Ovary (tissue), 10 donors: ENCODE measurements at regions of chr3 and their contacts with region 1.

Region 1: DNA sequence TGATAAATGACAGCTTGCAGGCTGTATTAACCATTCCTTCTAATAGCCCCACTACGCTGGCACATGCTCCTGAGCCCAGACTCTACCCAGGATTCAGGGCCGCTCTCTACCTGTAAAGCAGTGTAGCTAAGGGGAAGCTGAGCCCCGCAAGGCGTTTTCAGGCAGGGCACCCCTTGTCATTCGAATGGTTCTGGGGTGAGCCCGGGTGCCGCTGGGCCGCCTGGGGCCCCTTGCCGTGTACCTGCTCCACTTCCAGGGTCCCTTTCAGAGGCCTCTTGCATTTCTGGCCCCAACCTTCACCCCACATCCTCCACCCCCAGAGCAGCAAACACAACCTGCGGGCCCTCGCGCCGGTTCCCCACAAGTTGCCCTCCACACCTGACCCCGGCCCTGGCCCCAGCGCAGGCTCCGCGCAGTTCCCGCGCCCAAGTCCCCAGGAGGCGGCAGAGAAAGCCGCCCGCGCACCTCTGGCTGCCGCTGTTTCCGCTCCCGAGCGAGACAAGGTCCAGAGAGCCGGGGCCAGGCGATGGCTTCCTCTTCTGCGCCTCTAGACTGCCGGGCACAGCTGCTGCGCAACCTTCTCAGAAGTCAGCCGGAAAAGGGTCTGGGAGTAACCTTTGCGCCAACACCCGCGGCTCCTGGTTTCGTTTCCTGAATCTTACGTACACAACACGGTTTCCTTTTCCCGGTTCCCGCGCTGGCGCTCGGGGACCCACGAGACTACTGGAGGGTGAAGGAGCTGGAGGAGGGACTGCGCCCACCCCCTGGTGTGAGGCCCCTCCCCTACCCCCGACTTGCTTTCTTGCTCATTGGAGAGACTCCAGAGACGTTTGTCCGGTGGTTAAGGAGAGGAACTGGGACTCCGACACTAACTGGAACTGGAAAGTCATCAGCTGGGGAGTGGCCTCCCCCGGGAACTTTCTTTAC is at the start of gene PLSCR1:
- DNase-seq: peak; percentile 90 to 95 (median 92)
- H3K4me3 ChIP-seq: peak within 1 kb of the TSS; percentile 59
- H3K27ac ChIP-seq: peak within 1 kb of the TSS; percentile 98
- H3K4me1 ChIP-seq: peaks cover 6% of the 10 kb centered on the region
- H3K27me3 ChIP-seq: no peaks in the 10 kb centered on the region
- CTCF ChIP-seq: peak in 1 of 3 donors; percentile 8
- EP300 ChIP-seq: peak; percentile 94
- POLR2A ChIP-seq: peak; percentile 83
- total RNA-seq, gene PLSCR1: 74.4 to 156 (median 117) TPM

Region 2: GRCh38 chr3:146250449-146251382 is 293.5 kb before region 1 on chr3 and contains the start of gene PLSCR4:
- intact Hi-C with region 1: loop called in 1 of 4 experiments (anchors 10 kb)
- DNase-seq: peak; percentile 83 to 91 (median 90)
- H3K4me3 ChIP-seq: peak within 1 kb of the TSS; percentile 98
- H3K27ac ChIP-seq: peak within 1 kb of the TSS; percentile 89 to 99
- H3K4me1 ChIP-seq: peaks cover 3% of the 10 kb centered on the region
- H3K27me3 ChIP-seq: no peaks in the 10 kb centered on the region
- CTCF ChIP-seq: no peak
- EP300 ChIP-seq: no peak
- POLR2A ChIP-seq: no peak
- total RNA-seq, gene PLSCR4: 30.7 to 78.4 (median 50.9) TPM

Region 3: GRCh38 chr3:146374146-146374545 is 170.1 kb before region 1 on chr3:
- intact Hi-C with region 1: no loop called
- DNase-seq: no peak
- H3K4me3 ChIP-seq: no peak overlapping the region
- H3K27ac ChIP-seq: peak overlapping the region in 1 of 2 donors; percentile 54
- H3K4me1 ChIP-seq: peaks cover 6% of the 10 kb centered on the region
- H3K27me3 ChIP-seq: no peaks in the 10 kb centered on the region
- CTCF ChIP-seq: no peak
- EP300 ChIP-seq: no peak
- POLR2A ChIP-seq: no peak